AG04450 (cell line): ENCODE measurements at regions of chr7 and their contacts with region 1.

Region 1: DNA sequence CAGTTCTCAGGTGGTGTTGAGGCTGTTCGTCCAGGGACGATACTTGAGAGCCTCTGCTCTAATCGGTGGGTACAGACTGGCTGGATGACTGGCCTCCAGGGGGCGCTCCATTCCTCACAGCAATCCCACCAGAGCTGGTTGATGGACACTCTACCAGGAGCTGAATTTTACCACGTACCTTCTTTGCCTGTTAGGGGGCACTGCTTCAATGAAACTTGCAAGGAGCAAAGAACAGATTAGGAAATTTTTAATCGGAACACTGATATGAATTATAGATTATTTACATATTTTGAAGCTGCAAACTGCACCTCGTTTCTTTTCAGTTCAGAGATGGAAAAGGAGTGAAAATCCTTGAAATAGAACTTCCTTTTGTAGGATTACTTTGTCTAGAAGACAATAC is 44.9 kb downstream of the KBTBD2 start:
- DNase-seq: peak; percentile 56
- H3K4me3 ChIP-seq: no peak overlapping the region
- H3K27ac ChIP-seq: no peak overlapping the region
- H3K27me3 ChIP-seq: no peaks in the 10 kb centered on the region
- CTCF ChIP-seq: peak; percentile 87

Region 2: DNA sequence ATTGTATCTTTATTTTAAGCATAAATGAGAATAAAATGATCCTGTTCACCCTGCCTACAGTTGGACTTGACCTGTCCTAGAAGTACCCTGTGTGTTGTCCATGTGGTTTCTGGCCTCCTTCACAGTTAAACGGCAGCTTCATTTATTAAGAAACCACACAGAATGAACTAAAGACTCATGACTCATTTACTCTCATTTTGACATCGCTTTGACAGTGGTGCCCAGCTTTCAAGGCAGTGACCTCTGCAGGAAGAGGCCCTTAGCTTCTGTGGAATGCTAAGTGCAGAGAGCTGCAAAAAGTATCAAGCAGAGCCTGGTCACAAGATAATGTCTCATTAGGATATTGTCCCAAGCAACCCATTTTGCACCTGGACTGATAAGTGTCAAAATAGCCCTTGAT is 258.0 kb before region 1 on chr7:
- CTCF ChIA-PET with region 1: no interaction called
- POLR2A ChIA-PET with region 1: no interaction called
- DNase-seq: no peak
- H3K4me3 ChIP-seq: no peak overlapping the region
- H3K27ac ChIP-seq: peak overlapping the region; percentile 31
- H3K27me3 ChIP-seq: no peaks in the 10 kb centered on the region
- CTCF ChIP-seq: no peak

Region 3: DNA sequence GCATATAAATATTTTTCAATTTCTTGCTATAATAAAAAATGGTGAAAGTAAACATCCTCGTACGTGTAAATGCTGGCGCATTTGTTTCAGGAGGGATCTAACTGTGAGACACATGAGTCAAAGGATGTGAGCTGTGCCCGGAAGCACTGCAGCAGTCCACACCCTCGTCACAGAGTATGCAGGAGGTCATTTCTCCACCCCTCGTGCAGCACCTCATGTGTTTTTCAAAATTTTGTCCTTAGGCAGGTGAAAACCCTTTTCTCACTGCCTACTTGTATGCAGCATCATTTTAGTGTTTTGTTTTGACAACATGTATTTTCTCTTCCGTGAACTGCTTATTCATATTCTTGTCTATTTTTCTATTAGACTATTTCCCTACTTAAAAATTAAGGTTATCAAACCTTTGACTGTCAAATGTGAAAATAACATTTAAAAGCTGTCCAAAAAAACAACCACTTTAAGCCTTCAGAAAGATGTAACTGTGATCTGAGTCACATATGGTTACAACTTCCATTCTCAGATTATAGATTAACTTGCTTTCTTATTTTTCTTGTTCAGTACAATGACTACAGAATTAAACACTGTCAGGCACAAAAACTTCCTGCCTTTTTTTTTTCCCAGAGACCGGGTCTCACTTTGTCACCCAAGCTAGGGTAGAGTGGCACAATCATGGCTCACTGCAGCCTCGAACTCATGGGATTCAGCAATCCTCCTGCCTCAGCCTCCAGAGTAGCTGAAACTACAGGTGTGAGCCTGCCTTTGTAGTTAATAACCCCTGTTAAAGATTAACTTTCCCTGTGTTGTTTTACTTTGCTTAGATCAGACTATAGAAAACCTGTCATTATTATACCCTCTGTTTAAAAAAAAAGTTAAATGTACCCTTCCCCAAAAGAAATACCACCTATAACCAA is 188.4 kb before region 1 on chr7:
- CTCF ChIA-PET with region 1: no interaction called
- POLR2A ChIA-PET with region 1: no interaction called
- DNase-seq: no peak
- H3K4me3 ChIP-seq: no peak overlapping the region
- H3K27ac ChIP-seq: no peak overlapping the region
- H3K27me3 ChIP-seq: no peaks in the 10 kb centered on the region
- CTCF ChIP-seq: no peak

Region 4: GRCh38 chr7:32803406-32804141 is 43.1 kb before region 1 on chr7:
- CTCF ChIA-PET with region 1: interaction called, 11 read pairs
- POLR2A ChIA-PET with region 1: no interaction called
- DNase-seq: no peak
- H3K4me3 ChIP-seq: no peak overlapping the region
- H3K27ac ChIP-seq: no peak overlapping the region
- H3K27me3 ChIP-seq: no peaks in the 10 kb centered on the region
- CTCF ChIP-seq: no peak

Region 5: GRCh38 chr7:32871624-32872371 is 25.1 kb after region 1 on chr7:
- CTCF ChIA-PET with region 1: interaction called, 73 read pairs
- POLR2A ChIA-PET with region 1: no interaction called
- DNase-seq: no peak
- H3K4me3 ChIP-seq: no peak overlapping the region
- H3K27ac ChIP-seq: no peak overlapping the region
- H3K27me3 ChIP-seq: no peaks in the 10 kb centered on the region
- CTCF ChIP-seq: no peak

Region 6: DNA sequence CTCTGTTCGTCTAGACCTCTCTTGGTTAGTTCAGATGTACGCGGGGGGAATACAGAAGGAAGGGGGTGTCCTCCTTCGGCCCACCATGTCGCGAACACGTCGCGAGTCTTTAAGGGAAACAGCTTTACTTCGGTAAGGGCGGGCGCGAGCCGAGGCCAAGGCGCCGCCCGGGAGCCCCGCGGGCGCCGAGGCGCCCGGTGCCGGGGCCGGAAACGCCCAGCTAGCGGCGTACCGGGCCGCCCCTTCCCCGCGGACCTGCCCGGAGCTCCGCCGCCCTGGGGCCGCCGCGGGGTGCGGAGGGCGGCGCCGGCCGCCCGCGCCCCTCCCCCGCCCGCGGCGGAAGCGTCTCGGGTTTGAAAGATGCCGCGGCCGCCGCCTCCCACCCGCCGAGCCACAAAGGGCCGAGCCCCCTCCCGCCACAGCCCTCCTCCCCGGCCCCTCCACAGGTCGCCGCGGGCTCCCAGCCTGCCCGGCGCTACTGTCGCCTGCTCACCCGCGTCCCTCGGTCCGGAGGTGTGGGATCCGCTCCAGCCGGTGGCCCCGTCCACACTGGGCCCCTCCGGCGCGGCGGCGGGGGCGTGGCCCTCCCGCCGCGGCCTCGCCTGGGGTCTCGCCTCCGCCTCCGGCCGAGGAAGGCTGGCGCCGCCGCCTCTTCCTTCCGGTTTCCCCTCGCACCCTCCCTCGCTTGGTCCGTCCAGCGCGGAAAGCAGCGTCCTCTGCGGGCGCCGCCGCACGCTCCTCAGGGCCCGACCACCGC is 44.5 kb after region 1 on chr7 and contains the start of gene KBTBD2:
- CTCF ChIA-PET with region 1: interaction called, 27 read pairs
- POLR2A ChIA-PET with region 1: no interaction called
- DNase-seq: peak; percentile 56
- H3K4me3 ChIP-seq: peak within 1 kb of the TSS; percentile 68
- H3K27ac ChIP-seq: peak within 1 kb of the TSS; percentile 98
- H3K27me3 ChIP-seq: no peaks in the 10 kb centered on the region
- CTCF ChIP-seq: no peak
- polyA plus RNA-seq, gene KBTBD2: 21.9 and 26.1 TPM in 2 replicates

Region 7: GRCh38 chr7:32957326-32958045 is 110.8 kb after region 1 on chr7 and contains the start of gene FKBP9:
- CTCF ChIA-PET with region 1: interaction called, 11 read pairs
- POLR2A ChIA-PET with region 1: no interaction called
- DNase-seq: no peak
- H3K4me3 ChIP-seq: peak within 1 kb of the TSS; percentile 88
- H3K27ac ChIP-seq: peak within 1 kb of the TSS; percentile 77
- H3K27me3 ChIP-seq: no peaks in the 10 kb centered on the region
- CTCF ChIP-seq: no peak
- polyA plus RNA-seq, gene FKBP9: 177 and 204 TPM in 2 replicates

Region 8: GRCh38 chr7:33050535-33051318 is 204.0 kb after region 1 on chr7:
- CTCF ChIA-PET with region 1: interaction called, 26 read pairs
- POLR2A ChIA-PET with region 1: no interaction called
- DNase-seq: no peak
- H3K4me3 ChIP-seq: no peak overlapping the region
- H3K27ac ChIP-seq: no peak overlapping the region
- H3K27me3 ChIP-seq: no peaks in the 10 kb centered on the region
- CTCF ChIP-seq: peak; percentile 75

Region 9: DNA sequence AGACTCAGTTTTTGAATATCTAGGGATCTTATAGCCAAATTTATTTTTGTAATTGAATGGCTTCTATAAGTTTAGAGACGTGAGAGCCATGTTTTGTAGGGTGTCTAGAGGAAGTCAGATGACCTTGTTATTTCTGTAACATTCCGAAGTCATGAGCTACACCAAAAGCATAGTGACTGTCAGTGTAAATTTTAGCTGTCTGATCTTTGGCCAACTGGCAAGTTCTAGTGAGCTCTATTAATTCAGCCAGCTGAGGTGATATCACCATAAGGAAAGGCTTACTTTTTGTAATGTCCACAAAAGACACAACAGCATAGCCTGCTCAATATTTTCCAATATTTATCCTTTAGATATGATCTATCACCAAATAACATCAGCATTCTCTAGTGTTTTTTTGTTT is 225.8 kb after region 1 on chr7:
- CTCF ChIA-PET with region 1: interaction called, 23 read pairs
- POLR2A ChIA-PET with region 1: no interaction called
- DNase-seq: peak; percentile 21
- H3K4me3 ChIP-seq: no peak overlapping the region
- H3K27ac ChIP-seq: no peak overlapping the region
- H3K27me3 ChIP-seq: peaks cover 10% of the 10 kb centered on the region
- CTCF ChIP-seq: no peak

Region 10: DNA sequence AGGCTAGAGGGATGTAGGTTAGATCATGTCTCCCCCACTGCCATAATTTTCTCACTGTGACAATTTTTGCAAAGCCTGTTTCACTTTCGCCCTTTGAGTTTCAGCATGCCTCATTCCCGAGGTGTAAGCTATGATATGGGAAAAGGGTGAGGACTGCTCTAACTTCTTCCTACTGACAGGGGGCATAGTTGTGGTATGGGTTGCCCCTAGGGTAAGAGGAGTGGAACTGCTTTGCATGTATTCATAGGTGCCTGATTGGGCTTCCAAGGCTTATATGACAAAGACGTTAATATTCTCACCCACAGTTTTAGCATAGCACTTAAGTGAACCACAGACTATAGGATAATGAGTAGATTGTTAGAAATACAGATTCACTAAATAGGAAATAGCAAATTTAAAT is 431.4 kb after region 1 on chr7:
- CTCF ChIA-PET with region 1: no interaction called
- POLR2A ChIA-PET with region 1: no interaction called
- DNase-seq: no peak
- H3K4me3 ChIP-seq: no peak overlapping the region
- H3K27ac ChIP-seq: no peak overlapping the region
- H3K27me3 ChIP-seq: no peaks in the 10 kb centered on the region
- CTCF ChIP-seq: no peak